HepG2 (cell line): ENCODE measurements at regions of chr3 and their contacts with region 1.

Region 1: GRCh38 chr3:174270841-174271240 is 588.3 kb upstream of the NAALADL2 start:
- DNase-seq: no peak
- ATAC-seq: no peak
- H3K4me3 ChIP-seq: no peak overlapping the region
- H3K27ac ChIP-seq: no peak overlapping the region
- H3K4me1 ChIP-seq: no peaks in the 10 kb centered on the region
- H3K27me3 ChIP-seq: no peaks in the 10 kb centered on the region
- CTCF ChIP-seq: no peak
- EP300 ChIP-seq: no peak
- POLR2A ChIP-seq: no peak
- RAD21 ChIP-seq: no peak

Region 2: DNA sequence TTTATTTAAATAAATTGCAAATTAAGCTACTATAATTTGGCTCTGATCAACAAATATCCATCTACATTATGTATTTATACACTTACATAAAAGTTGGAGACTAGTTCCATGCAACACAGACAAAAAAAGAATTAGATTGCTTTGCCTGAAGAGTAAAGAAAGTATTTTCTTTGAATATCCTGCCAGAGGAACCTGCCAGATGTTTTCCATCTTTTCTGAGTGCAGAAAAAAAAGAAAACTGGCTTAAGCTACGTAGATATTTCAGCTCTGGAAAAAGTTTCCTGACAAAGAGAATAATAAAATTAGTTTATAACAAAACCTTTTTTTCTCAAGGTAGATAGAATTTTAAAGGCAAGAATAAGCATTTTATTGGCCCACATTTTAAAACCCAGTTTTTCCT is 19.2 kb before region 1 on chr3:
- CTCF ChIA-PET with region 1: no interaction called
- POLR2A ChIA-PET with region 1: no interaction called
- in situ Hi-C with region 1: no loop called
- intact Hi-C with region 1: loop called (anchors 2 kb)
- DNase-seq: no peak
- ATAC-seq: no peak
- H3K4me3 ChIP-seq: no peak overlapping the region
- H3K27ac ChIP-seq: no peak overlapping the region
- H3K4me1 ChIP-seq: no peaks in the 10 kb centered on the region
- H3K27me3 ChIP-seq: no peaks in the 10 kb centered on the region
- CTCF ChIP-seq: no peak
- EP300 ChIP-seq: no peak
- POLR2A ChIP-seq: no peak
- RAD21 ChIP-seq: no peak